GM12878 (cell line): ENCODE measurements at regions of chr13 and their contacts with region 1.

Region 1: GRCh38 chr13:114128624-114129522 is 3.5 kb downstream of the RASA3 start:
- DNase-seq: peak; percentile 81
- ATAC-seq: peak; percentile 72
- H3K4me3 ChIP-seq: peak overlapping the region; percentile 89
- H3K27ac ChIP-seq: peak overlapping the region; percentile 84
- H3K4me1 ChIP-seq: peaks cover 43% of the 10 kb centered on the region
- H3K27me3 ChIP-seq: no peaks in the 10 kb centered on the region
- CTCF ChIP-seq: no peak
- EP300 ChIP-seq: peak; percentile 29 to 69; a peak in 2 of 4 replicates
- POLR2A ChIP-seq: no peak; the same call in 1 of the 2 replicates
- RAD21 ChIP-seq: no peak

Region 2: GRCh38 chr13:113881614-113882266 is 247.1 kb before region 1 on chr13:
- CTCF ChIA-PET with region 1: no interaction called
- POLR2A ChIA-PET with region 1: no interaction called
- RAD21 ChIA-PET with region 1: no interaction called
- SMC1A ChIA-PET with region 1: no interaction called
- in situ Hi-C with region 1: no loop called
- intact Hi-C with region 1: no loop called
- DNase-seq: no peak
- ATAC-seq: no peak
- H3K4me3 ChIP-seq: no peak overlapping the region
- H3K27ac ChIP-seq: no peak overlapping the region
- H3K4me1 ChIP-seq: no peaks in the 10 kb centered on the region
- H3K27me3 ChIP-seq: peaks cover 0 to under 1% of the 10 kb centered on the region in 2 experiments; a peak in 1 of 4 replicates
- CTCF ChIP-seq: no peak
- EP300 ChIP-seq: no peak
- POLR2A ChIP-seq: no peak
- RAD21 ChIP-seq: no peak

Region 3: GRCh38 chr13:114047358-114047881 is 81.5 kb before region 1 on chr13:
- CTCF ChIA-PET with region 1: interaction called, 3 read pairs
- POLR2A ChIA-PET with region 1: no interaction called
- RAD21 ChIA-PET with region 1: no interaction called
- SMC1A ChIA-PET with region 1: no interaction called
- in situ Hi-C with region 1: no loop called
- intact Hi-C with region 1: loop called (anchors 5 kb)
- DNase-seq: peak; percentile 74
- ATAC-seq: peak; percentile 92
- H3K4me3 ChIP-seq: no peak overlapping the region
- H3K27ac ChIP-seq: peak overlapping the region; percentile 17; the same call in 1 of the 2 replicates
- H3K4me1 ChIP-seq: peaks cover 30% of the 10 kb centered on the region
- H3K27me3 ChIP-seq: no peaks in the 10 kb centered on the region
- CTCF ChIP-seq: no peak
- EP300 ChIP-seq: no peak
- POLR2A ChIP-seq: no peak
- RAD21 ChIP-seq: no peak